Ovary (tissue), 10 donors: ENCODE measurements at regions of chr9 and their contacts with region 1.

Region 1: GRCh38 chr9:98222885-98223640 is 30.6 kb upstream of the CORO2A start:
- DNase-seq: no peak
- H3K4me3 ChIP-seq: no peak overlapping the region
- H3K27ac ChIP-seq: no peak overlapping the region
- H3K4me1 ChIP-seq: no peaks in the 10 kb centered on the region
- H3K27me3 ChIP-seq: no peaks in the 10 kb centered on the region
- CTCF ChIP-seq: no peak
- EP300 ChIP-seq: no peak
- POLR2A ChIP-seq: no peak

Region 2: GRCh38 chr9:98271479-98271878 is 48.4 kb after region 1 on chr9:
- intact Hi-C with region 1: loop called in 1 of 4 experiments (anchors 5 kb)
- DNase-seq: no peak
- H3K4me3 ChIP-seq: no peak overlapping the region
- H3K27ac ChIP-seq: no peak overlapping the region
- H3K4me1 ChIP-seq: no peaks in the 10 kb centered on the region
- H3K27me3 ChIP-seq: no peaks in the 10 kb centered on the region
- CTCF ChIP-seq: no peak
- EP300 ChIP-seq: no peak
- POLR2A ChIP-seq: no peak

Region 3: GRCh38 chr9:98755006-98755575 is 532.0 kb after region 1 on chr9:
- intact Hi-C with region 1: no loop called
- DNase-seq: no peak
- H3K4me3 ChIP-seq: no peak overlapping the region
- H3K27ac ChIP-seq: no peak overlapping the region
- H3K4me1 ChIP-seq: no peaks in the 10 kb centered on the region
- H3K27me3 ChIP-seq: no peaks in the 10 kb centered on the region
- CTCF ChIP-seq: no peak
- EP300 ChIP-seq: no peak
- POLR2A ChIP-seq: no peak